CD4-positive, alpha-beta T cell (primary cell): ENCODE measurements at regions of chr5 and their contacts with region 1.

Region 1: DNA sequence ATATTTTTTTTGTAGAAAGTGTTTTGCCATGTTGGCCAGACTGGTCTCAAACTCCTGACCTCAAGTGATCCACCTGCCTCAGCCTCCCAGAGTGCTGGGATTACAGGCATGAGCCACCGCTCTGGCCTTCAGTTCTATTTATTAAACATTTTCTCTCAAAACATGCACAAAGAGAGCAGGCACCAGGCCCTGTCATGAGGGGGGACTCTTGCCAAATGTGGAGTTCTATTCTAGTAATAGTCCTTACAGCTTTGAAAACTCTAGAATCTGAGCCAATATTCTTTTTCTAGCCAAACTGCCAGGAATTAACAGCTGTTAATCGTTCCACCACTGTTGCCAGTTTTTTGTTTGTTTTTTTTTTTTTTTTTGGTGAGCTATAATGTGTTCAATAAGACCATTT is 124.6 kb downstream of the TARS1 start:
- DNase-seq: no peak
- ATAC-seq: no peak
- H3K4me3 ChIP-seq: no peak overlapping the region
- H3K4me3 Mint-ChIP-seq: no peak overlapping the region
- H3K27ac ChIP-seq: no peak overlapping the region
- H3K27ac Mint-ChIP-seq: no peak overlapping the region
- H3K4me1 ChIP-seq: no peaks in the 10 kb centered on the region
- H3K4me1 Mint-ChIP-seq: no peaks in the 10 kb centered on the region
- H3K27me3 ChIP-seq: no peaks in the 10 kb centered on the region
- H3K27me3 Mint-ChIP-seq: no peaks in the 10 kb centered on the region
- CTCF ChIP-seq: no peak

Region 2: DNA sequence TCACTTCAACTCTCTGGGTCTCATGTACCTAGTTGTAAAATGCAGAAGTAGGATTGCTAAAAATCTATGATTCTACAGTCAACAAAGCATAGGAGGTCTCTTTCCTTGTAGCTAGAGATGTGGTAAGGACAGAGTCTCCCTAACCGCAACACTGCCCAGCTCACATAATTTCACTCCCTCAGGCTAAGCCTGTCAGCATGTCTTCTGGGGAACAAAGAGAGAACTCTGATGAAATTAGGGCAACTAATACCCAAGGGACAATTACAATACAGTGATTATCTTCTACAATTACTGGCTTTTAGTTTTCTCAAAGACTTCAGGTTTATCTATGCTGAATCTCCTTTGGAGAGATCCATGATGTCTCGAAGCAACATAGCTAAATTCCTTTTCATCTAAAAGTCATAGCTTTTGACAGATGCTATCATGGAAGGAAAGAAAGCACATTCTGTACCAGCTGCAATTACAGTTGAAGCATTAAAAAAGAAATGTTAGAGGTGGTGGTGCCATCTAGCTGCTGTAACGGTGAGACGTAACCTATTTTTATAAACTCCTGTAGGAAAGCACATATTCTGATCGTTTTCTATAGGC is 265.6 kb before region 1 on chr5:
- CTCF ChIA-PET with region 1: no interaction called
- POLR2A ChIA-PET with region 1: no interaction called
- intact Hi-C with region 1: loop called in 1 of 2 experiments (anchors 10 kb)
- DNase-seq: peak in 2 of 14 experiments; percentile 29 to 39
- ATAC-seq: no peak
- H3K4me3 ChIP-seq: no peak overlapping the region
- H3K4me3 Mint-ChIP-seq: no peak overlapping the region
- H3K27ac ChIP-seq: no peak overlapping the region
- H3K27ac Mint-ChIP-seq: no peak overlapping the region
- H3K4me1 ChIP-seq: no peaks in the 10 kb centered on the region
- H3K4me1 Mint-ChIP-seq: peaks cover 10% of the 10 kb centered on the region
- H3K27me3 ChIP-seq: no peaks in the 10 kb centered on the region
- H3K27me3 Mint-ChIP-seq: no peaks in the 10 kb centered on the region
- CTCF ChIP-seq: no peak